ENCODE measurements at regions of chr9 and their contacts with region 1.

Region 1: GRCh38 chr9:133023117-133023890 is 7.5 kb upstream of the GTF3C5 start:
- DNase-seq: peak; percentile 71
- H3K4me3 Mint-ChIP-seq: peak overlapping the region; percentile 43
- H3K27ac Mint-ChIP-seq: no peak overlapping the region
- H3K4me1 Mint-ChIP-seq: peaks cover 24% of the 10 kb centered on the region
- H3K27me3 Mint-ChIP-seq: peaks cover 4% of the 10 kb centered on the region

Region 2: GRCh38 chr9:132357764-132358163 is 665.5 kb before region 1 on chr9:
- CTCF ChIA-PET with region 1: interaction called, 3 read pairs
- POLR2A ChIA-PET with region 1: interaction called, 10 read pairs
- DNase-seq: no peak
- H3K4me3 Mint-ChIP-seq: no peak overlapping the region
- H3K27ac Mint-ChIP-seq: no peak overlapping the region
- H3K4me1 Mint-ChIP-seq: peaks cover 25% of the 10 kb centered on the region
- H3K27me3 Mint-ChIP-seq: peaks cover 4% of the 10 kb centered on the region

Region 3: GRCh38 chr9:133009906-133010582 is 13.3 kb before region 1 on chr9:
- CTCF ChIA-PET with region 1: interaction called, 15 read pairs
- POLR2A ChIA-PET with region 1: no interaction called
- DNase-seq: no peak
- H3K4me3 Mint-ChIP-seq: no peak overlapping the region
- H3K27ac Mint-ChIP-seq: no peak overlapping the region
- H3K4me1 Mint-ChIP-seq: no peaks in the 10 kb centered on the region
- H3K27me3 Mint-ChIP-seq: peaks cover 24% of the 10 kb centered on the region

Region 4: GRCh38 chr9:133320421-133320881 is 297.1 kb after region 1 on chr9:
- CTCF ChIA-PET with region 1: no interaction called
- POLR2A ChIA-PET with region 1: no interaction called
- DNase-seq: peak; percentile 4
- H3K4me3 Mint-ChIP-seq: no peak overlapping the region
- H3K27ac Mint-ChIP-seq: no peak overlapping the region
- H3K4me1 Mint-ChIP-seq: no peaks in the 10 kb centered on the region
- H3K27me3 Mint-ChIP-seq: peaks cover 2% of the 10 kb centered on the region

Measured in activated CD4-positive, alpha-beta T cell treated with anti-CD3 and anti-CD28 coated beads, Interleukin-2, amount 10 ng/mL, durations not matched to agents 7 days and 5 days (primary cell).